Mammary epithelial cell (primary cell): ENCODE measurements at regions of chr20 and their contacts with region 1.

Region 1: GRCh38 chr20:62377615-62378178 is 9.2 kb upstream of the RPS21 start:
- DNase-seq: no peak
- H3K4me3 ChIP-seq: peak overlapping the region in 2 of 3 experiments; percentile 26 to 37
- H3K27ac ChIP-seq: peak overlapping the region; percentile 78
- H3K4me1 ChIP-seq: peaks cover 57% of the 10 kb centered on the region
- H3K27me3 ChIP-seq: no peaks in the 10 kb centered on the region
- CTCF ChIP-seq: no peak

Region 2: DNA sequence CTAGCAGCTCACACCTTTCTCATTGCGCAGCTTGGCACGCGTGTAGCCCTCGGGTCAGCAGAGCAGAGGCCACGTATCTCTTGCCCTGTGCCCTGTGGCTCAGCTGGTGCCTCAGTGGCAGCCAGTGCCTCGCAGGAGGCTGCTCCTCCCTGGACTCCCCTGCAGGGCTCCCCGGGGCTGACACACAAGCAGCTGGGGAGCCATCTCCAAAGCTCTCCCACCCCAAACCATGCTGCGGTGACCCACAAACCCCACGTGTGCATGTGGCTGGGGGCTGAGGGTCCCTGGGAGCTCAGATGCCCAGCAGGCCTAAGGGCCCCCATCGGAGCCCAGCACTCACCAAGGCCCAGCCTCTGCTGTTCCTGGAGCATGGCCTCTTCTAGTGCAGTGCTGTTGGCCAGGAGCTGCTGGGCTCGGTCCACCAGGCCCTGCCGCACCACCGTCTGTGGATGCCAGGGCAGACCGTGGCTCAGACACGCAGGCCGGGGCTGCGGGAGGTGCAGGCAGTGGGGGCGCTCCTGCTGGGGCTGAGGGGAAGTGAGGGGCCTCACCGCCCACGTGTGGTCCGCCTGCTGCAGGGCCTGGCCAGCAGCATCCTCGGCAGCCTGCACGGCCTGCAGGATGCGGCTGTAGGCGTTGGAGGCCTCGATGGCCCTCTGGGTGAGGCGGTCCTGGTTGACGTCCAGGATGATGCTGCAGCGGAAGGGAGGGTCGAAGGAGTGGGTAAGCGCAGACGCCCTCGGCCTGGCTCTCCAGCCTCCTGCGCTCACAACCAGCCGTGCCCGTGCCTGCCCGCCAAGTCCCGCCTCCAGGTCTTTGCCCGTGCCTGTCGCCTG is 61.1 kb before region 1 on chr20:
- CTCF ChIA-PET with region 1: no interaction called
- dilution Hi-C with region 1: no loop called
- in situ Hi-C with region 1: no loop called
- intact Hi-C with region 1: loop called (anchors 1 kb)
- DNase-seq: peak; percentile 78
- H3K4me3 ChIP-seq: no peak overlapping the region
- H3K27ac ChIP-seq: no peak overlapping the region
- H3K4me1 ChIP-seq: peaks cover 15% of the 10 kb centered on the region
- H3K27me3 ChIP-seq: no peaks in the 10 kb centered on the region
- CTCF ChIP-seq: no peak

Region 3: DNA sequence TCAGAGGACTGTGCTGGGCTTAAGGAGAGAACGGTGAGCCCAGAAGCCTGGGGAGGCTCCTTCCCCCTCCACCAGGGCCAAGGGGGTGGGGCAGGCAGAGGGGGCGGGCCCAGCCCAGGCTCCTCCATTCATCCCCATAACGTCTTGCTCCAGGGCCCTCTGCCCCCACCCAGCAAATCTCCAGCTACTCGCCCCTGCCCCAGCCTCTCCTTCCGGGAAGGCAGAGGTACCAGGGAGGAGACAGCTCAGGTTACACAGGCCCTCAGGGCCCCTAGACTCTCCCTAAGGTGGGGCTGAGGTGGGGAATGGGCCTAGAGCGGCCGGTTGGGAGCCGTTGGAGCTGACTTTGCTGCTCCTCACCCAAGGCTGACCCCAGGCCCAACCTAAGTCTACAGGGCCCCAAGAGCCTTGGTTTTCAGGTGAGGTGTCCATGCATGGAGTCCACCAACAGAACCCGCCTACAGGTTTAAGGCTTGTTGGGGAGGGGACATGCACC is 11.8 kb before region 1 on chr20:
- CTCF ChIA-PET with region 1: interaction called, 6 read pairs
- dilution Hi-C with region 1: no loop called
- in situ Hi-C with region 1: no loop called
- intact Hi-C with region 1: loop called (anchors 1 kb)
- DNase-seq: peak; percentile 75
- H3K4me3 ChIP-seq: peak overlapping the region; percentile 69 to 77 (median 76)
- H3K27ac ChIP-seq: peak overlapping the region; percentile 30
- H3K4me1 ChIP-seq: peaks cover 83% of the 10 kb centered on the region
- H3K27me3 ChIP-seq: no peaks in the 10 kb centered on the region
- CTCF ChIP-seq: no peak